AG04449 (cell line): ENCODE measurements at regions of chr18 and their contacts with region 1.

Region 1: GRCh38 chr18:47204908-47205522 is 28.9 kb upstream of the IER3IP1 start:
- DNase-seq: no peak
- H3K4me3 ChIP-seq: no peak overlapping the region
- CTCF ChIP-seq: peak; percentile 77

Region 2: DNA sequence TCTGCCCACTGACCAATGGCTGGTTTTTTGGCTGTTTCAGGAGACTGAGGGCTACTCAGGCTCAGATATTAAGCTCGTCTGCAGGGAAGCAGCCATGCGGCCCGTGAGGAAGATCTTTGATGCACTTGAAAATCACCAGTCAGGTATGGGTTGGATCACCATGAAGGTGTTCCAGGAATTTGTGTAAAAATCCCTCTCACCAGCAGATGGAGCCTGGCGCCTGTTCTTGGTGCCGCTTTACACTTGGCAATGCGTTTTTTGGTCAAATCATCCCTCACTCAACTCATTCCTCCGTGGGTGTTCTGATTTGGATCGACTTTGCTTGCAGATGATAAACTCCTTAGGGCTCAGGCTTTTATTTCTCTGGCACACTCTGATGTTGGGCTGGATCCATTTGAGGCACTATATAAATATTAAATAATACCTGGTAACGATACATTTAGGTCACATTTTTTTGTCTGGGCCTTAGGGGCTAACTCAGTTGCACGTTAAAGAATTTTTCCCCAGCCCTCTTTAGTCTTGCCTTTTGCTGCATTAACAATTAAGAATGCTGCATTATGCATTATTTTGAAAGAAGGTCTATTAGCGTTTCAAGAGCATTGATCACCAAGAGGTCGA is 104.7 kb before region 1 on chr18:
- CTCF ChIA-PET with region 1: interaction called, 187 read pairs
- POLR2A ChIA-PET with region 1: interaction called, 4 read pairs
- DNase-seq: no peak
- H3K4me3 ChIP-seq: no peak overlapping the region
- CTCF ChIP-seq: peak; percentile 75

Region 3: DNA sequence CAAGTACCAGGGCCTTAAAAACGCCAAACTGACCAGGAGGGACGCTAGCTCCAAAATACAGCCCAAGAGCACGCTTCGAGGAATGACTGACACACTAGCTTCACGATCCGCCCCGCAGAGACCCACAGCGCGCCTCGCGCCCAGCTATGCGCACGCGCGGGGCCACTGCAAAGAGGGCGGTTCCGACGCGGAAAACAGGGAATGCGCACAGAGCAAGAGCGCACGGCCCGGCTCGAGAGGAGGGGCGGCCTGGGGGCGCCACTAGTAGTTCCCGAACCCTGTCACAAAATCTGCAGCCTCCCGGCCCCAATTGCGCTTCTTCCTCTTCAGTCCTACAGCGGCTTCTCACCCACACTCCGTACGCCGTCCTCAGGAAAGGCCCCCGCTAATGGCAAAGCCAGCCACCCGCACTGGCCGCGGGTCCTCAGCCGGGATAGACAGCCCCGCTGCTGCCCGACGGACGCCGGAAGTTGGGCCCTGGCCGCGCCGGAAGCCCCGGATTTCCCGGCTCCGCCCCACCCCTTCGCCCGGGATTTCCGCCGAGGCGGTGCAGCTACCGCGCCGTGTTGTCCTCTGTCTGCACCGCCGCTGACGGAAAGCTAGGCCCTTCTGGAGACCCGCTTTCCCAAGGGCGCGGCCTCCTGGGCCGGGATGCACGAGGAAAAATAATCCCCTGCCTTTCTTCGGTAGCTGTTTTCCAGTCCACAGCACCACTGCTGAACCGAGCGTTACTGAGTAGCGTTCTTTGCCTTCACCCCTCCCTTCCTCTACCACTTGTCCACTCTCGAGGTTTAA is 54.8 kb before region 1 on chr18 and contains the start of gene HDHD2:
- CTCF ChIA-PET with region 1: interaction called, 10 read pairs
- POLR2A ChIA-PET with region 1: no interaction called
- DNase-seq: no peak
- H3K4me3 ChIP-seq: peak within 1 kb of the TSS; percentile 80
- CTCF ChIP-seq: no peak

Region 4: GRCh38 chr18:47215554-47216138 is 10.6 kb after region 1 on chr18:
- CTCF ChIA-PET with region 1: interaction called, 54 read pairs
- POLR2A ChIA-PET with region 1: no interaction called
- DNase-seq: peak; percentile 33
- H3K4me3 ChIP-seq: no peak overlapping the region
- CTCF ChIP-seq: peak; percentile 58

Region 5: GRCh38 chr18:47251289-47252120 is 46.5 kb after region 1 on chr18 and contains the start of gene SKOR2:
- CTCF ChIA-PET with region 1: no interaction called
- POLR2A ChIA-PET with region 1: no interaction called
- DNase-seq: no peak
- H3K4me3 ChIP-seq: 0 out of 2 replicates have a peak within 1 kb of the TSS, but pooled peaks have one; percentile 6
- CTCF ChIP-seq: no peak